Activated CD4-positive, alpha-beta T cell treated with anti-CD3 and anti-CD28 coated beads for 36 hours (primary cell): ENCODE measurements at regions of chr4 and their contacts with region 1.

Region 1: DNA sequence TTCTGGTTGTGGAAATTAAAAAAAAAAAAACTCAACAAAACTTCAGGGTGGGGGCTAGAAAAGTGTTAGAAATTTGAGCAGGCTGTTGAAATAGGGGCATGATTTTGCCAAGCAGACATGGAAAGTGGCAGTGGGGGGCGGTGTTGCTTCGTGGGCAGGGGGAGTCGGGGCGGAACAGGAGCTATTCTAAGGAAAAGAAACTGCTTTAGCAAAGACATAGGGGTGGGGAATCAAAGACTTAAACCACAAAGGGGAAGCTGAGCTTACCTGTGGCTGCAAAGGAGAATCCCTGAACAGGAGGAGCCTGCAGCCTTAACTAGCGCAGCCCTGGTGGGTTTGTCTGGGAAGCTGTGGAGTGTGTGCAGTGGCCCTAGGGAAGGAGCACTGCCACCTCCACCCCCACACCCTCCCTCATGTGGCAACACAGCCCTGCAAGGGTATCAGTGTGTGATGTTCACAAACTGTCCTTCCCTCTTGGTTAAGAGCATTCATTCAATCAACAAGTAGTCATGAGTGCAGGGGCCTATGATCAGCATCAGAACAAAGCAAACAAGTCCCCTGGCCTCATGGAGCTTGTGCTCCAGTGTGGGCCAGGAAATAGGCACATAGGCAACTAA is 20.5 kb downstream of the SEL1L3 start:
- DNase-seq: peak; percentile 57
- ATAC-seq: peak; percentile 17
- H3K4me3 Mint-ChIP-seq: no peak overlapping the region
- H3K27ac Mint-ChIP-seq: peak overlapping the region; percentile 20
- H3K4me1 Mint-ChIP-seq: peaks cover 42% of the 10 kb centered on the region
- H3K27me3 Mint-ChIP-seq: no peaks in the 10 kb centered on the region

Region 2: GRCh38 chr4:25792200-25792791 is 50.0 kb before region 1 on chr4:
- CTCF ChIA-PET with region 1: no interaction called
- POLR2A ChIA-PET with region 1: no interaction called
- intact Hi-C with region 1: no loop called
- DNase-seq: peak; percentile 29
- ATAC-seq: no peak
- H3K4me3 Mint-ChIP-seq: no peak overlapping the region
- H3K27ac Mint-ChIP-seq: no peak overlapping the region
- H3K4me1 Mint-ChIP-seq: no peaks in the 10 kb centered on the region
- H3K27me3 Mint-ChIP-seq: no peaks in the 10 kb centered on the region

Region 3: DNA sequence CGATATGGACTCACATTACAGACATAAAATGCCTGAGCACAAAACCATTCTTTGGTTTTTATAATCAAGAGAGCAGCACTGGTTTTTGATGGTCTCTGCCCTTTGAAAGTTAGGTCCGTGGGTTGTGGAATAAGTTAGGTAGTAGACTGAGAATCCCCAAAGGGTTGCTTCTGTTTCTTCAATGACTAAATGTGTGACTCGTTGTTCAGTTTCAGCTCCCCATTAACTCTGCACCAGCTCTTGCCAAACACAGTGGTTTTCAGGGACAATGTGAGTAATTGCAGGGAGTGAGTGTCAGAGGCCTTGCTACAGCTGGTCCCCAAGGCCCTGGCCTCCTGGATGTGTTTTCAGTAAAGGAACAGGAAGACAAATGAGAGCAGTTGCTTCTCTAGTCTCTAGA is 96.5 kb after region 1 on chr4:
- CTCF ChIA-PET with region 1: no interaction called
- POLR2A ChIA-PET with region 1: interaction called, 3 read pairs
- intact Hi-C with region 1: loop called in 1 of 2 experiments (anchors 1 kb)
- DNase-seq: peak; percentile 76
- ATAC-seq: peak; percentile 97
- H3K4me3 Mint-ChIP-seq: peak overlapping the region; percentile 5
- H3K27ac Mint-ChIP-seq: peak overlapping the region; percentile 72
- H3K4me1 Mint-ChIP-seq: peaks cover 22% of the 10 kb centered on the region
- H3K27me3 Mint-ChIP-seq: peaks cover 18% of the 10 kb centered on the region